ENCODE measurements at regions of chr9 and their contacts with region 1.

Region 1: DNA sequence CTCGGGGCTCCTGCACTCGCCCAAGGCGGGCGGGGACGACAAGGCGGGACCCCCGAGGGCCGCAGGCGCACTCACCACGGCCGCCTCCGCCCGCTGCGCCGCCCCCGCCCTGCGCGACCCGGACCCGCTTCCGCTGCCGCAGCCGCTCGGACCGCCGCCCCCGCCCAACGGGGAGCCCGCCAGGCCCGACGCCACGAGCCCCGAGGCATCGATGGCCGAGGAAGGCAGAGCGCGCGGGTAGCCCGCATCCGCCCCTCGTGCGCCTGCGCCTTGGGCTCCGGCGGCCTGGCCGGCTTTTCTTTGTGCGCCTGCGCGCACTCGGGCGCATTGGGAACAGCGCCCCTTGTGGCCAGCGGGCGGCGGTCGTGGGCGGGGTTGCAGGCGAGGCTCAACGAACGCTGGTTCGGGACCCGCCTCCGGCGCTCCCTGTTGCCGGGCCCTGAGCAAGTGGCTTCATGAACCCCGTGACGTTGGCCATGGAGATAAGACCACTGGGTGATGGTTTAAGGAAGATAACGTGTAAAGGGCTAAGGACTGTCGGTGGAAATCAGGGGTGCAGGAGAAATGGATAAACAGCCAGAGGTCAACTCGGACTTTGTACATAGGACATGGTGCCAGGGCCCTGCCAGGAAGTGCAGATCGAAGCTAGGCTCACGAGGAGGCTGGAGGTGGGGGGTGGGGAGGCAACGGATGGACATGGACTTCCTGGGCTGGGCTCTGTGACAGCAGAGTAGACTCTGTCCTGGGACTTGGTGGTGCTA is at the starts of genes C8G and FBXW5:
- DNase-seq: peak; percentile 89
- ATAC-seq: peak; percentile 91
- H3K4me3 ChIP-seq: peak within 1 kb of the TSS; percentile 79
- H3K27ac ChIP-seq: peak within 1 kb of the TSS; percentile 97
- H3K4me1 ChIP-seq: peaks cover 4% of the 10 kb centered on the region
- H3K27me3 ChIP-seq: no peaks in the 10 kb centered on the region
- CTCF ChIP-seq: peak; percentile 98
- POLR2A ChIP-seq: no peak; the same call in 1 of the 2 replicates
- RAD21 ChIP-seq: peak; percentile 31
- total RNA-seq, gene C8G: not detected in 2 replicates
- total RNA-seq, gene FBXW5: 65.1 and 72.2 TPM in 2 replicates

Region 2: DNA sequence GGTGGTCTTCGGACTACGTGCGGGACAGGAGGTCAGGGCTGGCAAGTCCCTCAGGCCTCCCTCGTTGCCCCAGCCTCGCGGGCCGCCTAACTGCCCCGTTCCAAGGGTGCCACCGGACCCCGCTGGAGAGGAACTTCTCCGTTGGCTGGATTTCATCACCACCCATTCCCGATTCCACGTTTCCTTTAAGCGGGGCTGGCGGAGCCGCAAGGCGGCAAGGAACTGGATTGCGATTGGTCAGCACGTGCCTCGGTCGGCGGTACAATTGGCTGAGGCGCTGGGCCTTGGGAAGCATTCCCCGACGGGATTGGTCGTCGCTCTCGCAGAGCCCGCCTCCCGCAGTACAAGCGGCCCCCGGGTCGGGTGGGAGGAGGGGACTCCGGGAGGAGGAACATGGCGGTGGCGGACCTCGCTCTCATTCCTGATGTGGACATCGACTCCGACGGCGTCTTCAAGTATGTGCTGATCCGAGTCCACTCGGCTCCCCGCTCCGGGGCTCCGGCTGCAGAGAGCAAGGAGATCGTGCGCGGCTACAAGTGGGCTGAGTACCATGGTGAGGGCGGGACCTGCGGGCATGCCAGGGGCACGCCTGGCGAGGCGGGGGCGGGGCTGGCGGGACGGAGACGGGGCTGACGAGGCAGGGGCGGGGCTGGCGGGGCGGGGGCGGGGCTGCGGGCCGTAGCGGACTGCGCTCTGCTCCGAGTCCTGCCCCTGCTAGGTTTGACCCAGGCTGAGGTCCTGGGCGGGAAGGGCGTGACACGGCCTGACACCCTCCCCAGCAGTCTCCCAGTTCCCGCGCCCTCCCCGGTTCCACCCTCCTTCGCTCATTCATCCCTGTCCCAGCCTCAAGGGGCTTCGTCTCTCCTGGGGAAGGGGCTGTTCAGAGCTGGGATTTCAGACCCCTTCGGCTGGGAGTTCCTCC is 95.4 kb before region 1 on chr9 and contains the start of gene PHPT1:
- CTCF ChIA-PET with region 1: no interaction called
- POLR2A ChIA-PET with region 1: interaction called, 3 read pairs
- dilution Hi-C with region 1: no loop called
- in situ Hi-C with region 1: no loop called
- intact Hi-C with region 1: loop called (anchors 2 kb)
- DNase-seq: peak; percentile 99
- ATAC-seq: peak; percentile 84
- H3K4me3 ChIP-seq: peak within 1 kb of the TSS; percentile 92
- H3K27ac ChIP-seq: peak within 1 kb of the TSS; percentile 97
- H3K4me1 ChIP-seq: peaks cover 9% of the 10 kb centered on the region
- H3K27me3 ChIP-seq: peaks cover 20% of the 10 kb centered on the region
- CTCF ChIP-seq: no peak
- POLR2A ChIP-seq: peak; percentile 89
- RAD21 ChIP-seq: no peak
- total RNA-seq, gene PHPT1: 70.3 and 79.8 TPM in 2 replicates

Region 3: DNA sequence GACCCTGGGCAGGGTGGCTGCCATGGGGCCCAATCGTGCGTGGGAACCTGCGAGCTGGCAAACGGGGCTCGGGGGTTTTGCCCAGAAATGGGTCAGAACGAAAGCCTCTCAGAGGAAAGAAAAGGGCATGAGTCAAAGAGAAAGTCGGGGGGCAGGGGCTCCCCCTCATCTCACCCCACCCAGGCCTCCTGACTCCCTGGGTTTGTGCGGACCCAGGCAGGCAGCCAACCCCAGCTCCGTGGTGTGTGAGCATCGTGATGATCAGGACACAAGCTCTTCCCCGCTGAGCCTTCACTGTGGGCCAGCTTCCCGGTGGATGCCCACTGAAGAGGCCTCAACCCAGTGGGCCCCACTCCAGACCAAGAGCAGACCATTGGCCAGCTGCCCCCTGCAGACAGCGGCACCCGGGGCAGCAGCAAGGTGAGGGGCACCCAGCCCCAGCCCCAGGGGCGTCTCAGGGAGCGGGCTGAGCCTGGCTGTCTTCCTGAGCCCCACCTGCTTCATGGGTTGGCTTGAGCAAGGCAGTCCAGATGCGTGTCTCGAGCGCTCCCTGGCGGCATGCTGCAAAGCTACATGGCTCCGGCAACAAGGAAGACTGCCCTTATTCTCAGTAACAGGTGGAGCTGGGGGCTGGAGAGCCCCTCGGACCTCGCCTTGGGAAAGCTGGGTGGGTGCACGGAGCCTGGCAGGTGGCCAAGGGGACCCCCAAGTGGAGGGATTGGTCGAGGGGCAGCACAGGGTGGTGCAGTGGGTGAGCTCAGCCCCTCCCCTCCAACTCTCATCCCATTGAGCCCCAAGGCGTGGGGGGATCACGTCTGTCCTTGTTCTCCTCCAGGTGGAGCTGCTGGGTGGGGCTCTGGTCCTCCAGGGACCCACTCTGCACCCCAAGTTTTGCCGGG is 90.4 kb after region 1 on chr9:
- CTCF ChIA-PET with region 1: interaction called, 27 read pairs
- POLR2A ChIA-PET with region 1: no interaction called
- dilution Hi-C with region 1: no loop called
- in situ Hi-C with region 1: no loop called
- intact Hi-C with region 1: loop called (anchors 1 kb)
- DNase-seq: peak; percentile 77
- ATAC-seq: peak; percentile 97
- H3K4me3 ChIP-seq: no peak overlapping the region
- H3K27ac ChIP-seq: no peak overlapping the region
- H3K4me1 ChIP-seq: no peaks in the 10 kb centered on the region
- H3K27me3 ChIP-seq: peaks cover 2% of the 10 kb centered on the region; the same call in 1 of the 2 replicates
- CTCF ChIP-seq: peak; percentile 88
- POLR2A ChIP-seq: no peak
- RAD21 ChIP-seq: peak; percentile 87

Measured in IMR-90 (cell line).